Mammary epithelial cell (primary cell): ENCODE measurements at regions of chr7 and their contacts with region 1.

Region 1: GRCh38 chr7:138008547-138009349 is 6.9 kb upstream of the CREB3L2 start:
- DNase-seq: peak; percentile 53
- H3K4me3 ChIP-seq: no peak overlapping the region
- H3K27ac ChIP-seq: no peak overlapping the region
- H3K4me1 ChIP-seq: no peaks in the 10 kb centered on the region
- H3K27me3 ChIP-seq: no peaks in the 10 kb centered on the region
- CTCF ChIP-seq: peak; percentile 69 to 86

Region 2: DNA sequence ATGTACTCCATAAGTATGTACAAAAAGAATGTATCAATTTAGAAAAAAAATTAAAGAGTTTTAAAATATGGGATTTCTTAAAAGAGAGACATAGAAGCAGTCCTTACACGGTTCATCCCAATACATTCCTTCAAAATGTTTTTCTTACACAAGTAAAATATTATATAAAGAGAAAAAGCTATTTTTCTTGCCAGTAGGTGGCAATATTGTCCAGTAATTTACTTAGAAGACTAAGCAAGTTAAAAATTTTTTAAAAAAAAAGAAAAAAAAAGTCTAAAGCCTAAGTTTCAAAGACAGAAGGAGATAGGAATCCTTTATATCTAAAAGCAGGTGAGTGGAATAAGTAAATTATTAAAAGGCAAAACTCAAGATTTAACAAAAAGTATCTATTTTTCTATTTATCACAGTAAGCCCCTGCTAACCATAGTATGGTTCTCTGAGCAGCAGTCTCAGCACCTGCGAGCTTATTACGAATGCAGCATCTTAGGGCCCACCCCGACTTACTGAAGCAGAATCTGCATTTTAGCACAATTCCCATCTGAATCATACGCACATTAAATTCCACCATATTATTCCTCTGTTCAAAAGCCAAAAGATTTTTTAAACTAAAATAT is 402.6 kb before region 1 on chr7:
- CTCF ChIA-PET with region 1: no interaction called
- dilution Hi-C with region 1: no loop called
- in situ Hi-C with region 1: no loop called
- intact Hi-C with region 1: loop called (anchors 2 kb)
- DNase-seq: peak; percentile 25
- H3K4me3 ChIP-seq: no peak overlapping the region
- H3K27ac ChIP-seq: no peak overlapping the region
- H3K4me1 ChIP-seq: no peaks in the 10 kb centered on the region
- H3K27me3 ChIP-seq: peaks cover 10% of the 10 kb centered on the region
- CTCF ChIP-seq: peak; percentile 13 to 39

Region 3: GRCh38 chr7:137816696-137817320 is 191.9 kb before region 1 on chr7:
- CTCF ChIA-PET with region 1: interaction called, 3 read pairs
- dilution Hi-C with region 1: no loop called
- in situ Hi-C with region 1: no loop called
- intact Hi-C with region 1: loop called (anchors 1 kb)
- DNase-seq: no peak
- H3K4me3 ChIP-seq: no peak overlapping the region
- H3K27ac ChIP-seq: no peak overlapping the region
- H3K4me1 ChIP-seq: no peaks in the 10 kb centered on the region
- H3K27me3 ChIP-seq: no peaks in the 10 kb centered on the region
- CTCF ChIP-seq: peak in 1 of 2 donors; percentile 58

Region 4: DNA sequence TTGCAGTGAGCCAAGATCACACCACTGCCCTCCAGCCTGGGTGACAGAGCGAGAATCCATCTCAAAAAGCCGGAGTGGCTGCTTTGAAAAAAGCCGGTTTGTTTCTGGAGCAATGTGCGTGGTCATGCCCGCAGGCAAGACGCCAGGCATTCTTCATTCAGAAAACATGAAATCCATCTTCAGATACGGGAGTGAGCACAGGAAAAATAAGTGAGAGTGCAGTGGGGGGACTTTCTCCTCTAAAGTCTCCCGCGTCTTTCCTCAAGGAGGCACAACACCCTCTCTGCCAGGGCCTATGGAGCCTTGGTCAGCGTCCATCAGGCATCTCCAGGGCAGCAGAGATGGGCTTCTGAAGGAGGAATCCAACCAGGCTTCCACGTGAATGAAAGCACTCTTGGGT is 99.7 kb before region 1 on chr7:
- CTCF ChIA-PET with region 1: no interaction called
- dilution Hi-C with region 1: no loop called
- in situ Hi-C with region 1: loop called (anchors 5 to 10 kb)
- intact Hi-C with region 1: no loop called
- DNase-seq: no peak
- H3K4me3 ChIP-seq: no peak overlapping the region
- H3K27ac ChIP-seq: no peak overlapping the region
- H3K4me1 ChIP-seq: no peaks in the 10 kb centered on the region
- H3K27me3 ChIP-seq: no peaks in the 10 kb centered on the region
- CTCF ChIP-seq: no peak